ENCODE measurements at regions of chr3 and their contacts with region 1.

Region 1: GRCh38 chr3:94285870-94286269 is 223.0 kb downstream of the NSUN3 start:
- DNase-seq: peak; percentile 5
- H3K4me3 ChIP-seq: no peak overlapping the region
- H3K27ac ChIP-seq: no peak overlapping the region
- H3K4me1 ChIP-seq: no peaks in the 10 kb centered on the region
- H3K27me3 ChIP-seq: no peaks in the 10 kb centered on the region
- CTCF ChIP-seq: peak; percentile 14 to 39

Region 2: GRCh38 chr3:94234177-94234788 is 51.6 kb before region 1 on chr3:
- CTCF ChIA-PET with region 1: no interaction called
- dilution Hi-C with region 1: no loop called
- in situ Hi-C with region 1: no loop called
- intact Hi-C with region 1: loop called (anchors 5 kb)
- DNase-seq: peak; percentile 42
- H3K4me3 ChIP-seq: no peak overlapping the region
- H3K27ac ChIP-seq: no peak overlapping the region
- H3K4me1 ChIP-seq: no peaks in the 10 kb centered on the region
- H3K27me3 ChIP-seq: no peaks in the 10 kb centered on the region
- CTCF ChIP-seq: peak; percentile 65 to 76

Region 3: GRCh38 chr3:94249585-94249984 is 36.3 kb before region 1 on chr3:
- CTCF ChIA-PET with region 1: no interaction called
- dilution Hi-C with region 1: no loop called
- in situ Hi-C with region 1: no loop called
- intact Hi-C with region 1: loop called (anchors 2 kb)
- DNase-seq: peak; percentile 47
- H3K4me3 ChIP-seq: no peak overlapping the region
- H3K27ac ChIP-seq: no peak overlapping the region
- H3K4me1 ChIP-seq: no peaks in the 10 kb centered on the region
- H3K27me3 ChIP-seq: peaks cover 2% of the 10 kb centered on the region
- CTCF ChIP-seq: peak; percentile 85 to 89

Region 4: GRCh38 chr3:94413724-94414111 is 127.8 kb after region 1 on chr3:
- CTCF ChIA-PET with region 1: no interaction called
- dilution Hi-C with region 1: no loop called
- in situ Hi-C with region 1: no loop called
- intact Hi-C with region 1: no loop called
- DNase-seq: peak; percentile 52
- H3K4me3 ChIP-seq: no peak overlapping the region
- H3K27ac ChIP-seq: peak overlapping the region; percentile 57
- H3K4me1 ChIP-seq: peaks cover 11% of the 10 kb centered on the region
- H3K27me3 ChIP-seq: no peaks in the 10 kb centered on the region
- CTCF ChIP-seq: no peak